Activated CD4-positive, alpha-beta T cell treated with anti-CD3 and anti-CD28 coated beads, Interleukin-2, amount 10 ng/mL, durations not matched to agents 24 days and 14 days (primary cell): ENCODE measurements at regions of chr14 and their contacts with region 1.

Region 1: GRCh38 chr14:105065280-105066228 is at the start of gene GPR132:
- DNase-seq: peak; percentile 97
- H3K4me3 Mint-ChIP-seq: peak within 1 kb of the TSS; percentile 92
- H3K27ac Mint-ChIP-seq: peak within 1 kb of the TSS; percentile 90
- H3K4me1 Mint-ChIP-seq: peaks cover 59% of the 10 kb centered on the region
- H3K27me3 Mint-ChIP-seq: no peaks in the 10 kb centered on the region
- total RNA-seq, gene GPR132: 25.8 and 31.5 TPM in 2 replicates

Region 2: DNA sequence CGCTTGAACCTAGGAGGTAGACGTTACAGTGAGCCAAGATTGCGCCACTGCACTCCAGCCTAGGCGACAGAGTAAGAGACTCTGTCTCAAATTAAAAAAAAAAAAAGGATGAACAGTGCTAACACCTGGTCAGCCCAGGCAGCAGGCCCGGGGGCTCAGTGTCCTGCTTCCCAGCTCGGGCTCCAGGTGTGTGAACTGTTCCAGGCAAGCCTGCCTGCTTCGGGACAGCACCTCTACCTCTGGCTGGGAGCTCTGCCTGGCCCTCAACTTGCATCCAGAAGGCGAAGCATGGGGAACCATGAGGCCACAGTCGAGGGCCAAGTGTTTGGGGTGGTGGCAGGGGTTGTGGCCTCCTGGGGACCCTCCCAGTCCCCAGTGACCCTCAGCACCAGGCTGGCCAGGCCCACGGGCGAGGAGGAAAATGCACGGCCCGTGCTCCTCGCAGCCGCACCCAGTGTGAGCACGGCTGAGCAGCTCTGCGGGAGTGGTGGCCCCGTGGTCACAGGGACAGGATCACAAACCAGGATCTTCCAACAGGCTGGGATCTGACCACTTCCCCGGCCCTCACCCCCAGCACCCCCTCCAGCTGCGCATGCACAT is 60.1 kb before region 1 on chr14:
- intact Hi-C with region 1: no loop called
- DNase-seq: no peak
- H3K4me3 Mint-ChIP-seq: no peak overlapping the region
- H3K27ac Mint-ChIP-seq: no peak overlapping the region
- H3K4me1 Mint-ChIP-seq: peaks cover 4% of the 10 kb centered on the region
- H3K27me3 Mint-ChIP-seq: no peaks in the 10 kb centered on the region

Region 3: GRCh38 chr14:105294142-105294597 is 228.6 kb after region 1 on chr14:
- intact Hi-C with region 1: loop called (anchors 10 kb)
- DNase-seq: peak; percentile 94
- H3K4me3 Mint-ChIP-seq: peak overlapping the region; percentile 80
- H3K27ac Mint-ChIP-seq: peak overlapping the region; percentile 99
- H3K4me1 Mint-ChIP-seq: peaks cover 43% of the 10 kb centered on the region
- H3K27me3 Mint-ChIP-seq: no peaks in the 10 kb centered on the region